ENCODE measurements at regions of chr16 and their contacts with region 1.

Region 1: DNA sequence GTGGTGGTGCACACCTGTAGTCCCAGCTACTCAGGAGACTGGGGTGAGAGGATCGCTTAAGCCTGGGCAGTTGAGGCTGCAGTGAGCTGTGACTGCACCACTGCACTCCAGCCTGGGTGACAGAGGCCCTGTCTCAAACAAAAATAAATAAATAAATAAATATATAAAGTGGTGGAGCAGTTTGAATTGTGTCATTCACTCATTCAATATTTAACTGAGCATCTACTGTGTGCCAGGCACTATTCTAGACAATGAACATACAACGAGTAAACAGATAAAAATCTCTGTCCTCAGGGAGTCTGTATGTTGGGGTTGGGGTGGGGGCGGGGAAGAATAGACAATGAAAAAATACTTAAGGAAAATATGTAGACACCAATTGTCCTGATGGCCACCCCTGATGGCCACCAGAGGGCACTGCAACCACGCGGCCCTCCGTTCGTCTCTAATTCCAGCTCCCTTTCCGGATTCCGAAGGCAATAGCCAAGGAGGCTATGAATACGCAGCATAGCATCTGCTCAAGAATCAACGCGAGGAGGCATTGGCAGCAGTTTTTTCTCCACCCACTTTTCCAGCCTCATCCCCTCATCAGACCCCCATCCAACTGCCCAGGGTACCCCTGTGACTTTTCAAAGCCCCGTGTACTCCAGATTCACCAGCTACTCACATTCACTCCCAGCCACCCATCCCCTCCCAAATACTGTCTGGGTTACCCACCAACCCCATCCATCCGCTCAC is 21.4 kb downstream of the QPRT start:
- DNase-seq: peak; percentile 55 to 89 (median 75)
- ATAC-seq: no peak
- H3K4me3 ChIP-seq: no peak overlapping the region
- H3K4me3 Mint-ChIP-seq: peak overlapping the region; percentile 52
- H3K27ac ChIP-seq: peak overlapping the region in 1 of 2 experiments; percentile 86
- H3K27ac Mint-ChIP-seq: peak overlapping the region; percentile 92
- H3K4me1 ChIP-seq: peaks cover 32% of the 10 kb centered on the region
- H3K4me1 Mint-ChIP-seq: peaks cover 37% of the 10 kb centered on the region
- H3K27me3 ChIP-seq: no peaks in the 10 kb centered on the region
- H3K27me3 Mint-ChIP-seq: no peaks in the 10 kb centered on the region
- CTCF ChIP-seq: peak; percentile 90

Region 2: GRCh38 chr16:29720699-29721098 is 20.3 kb after region 1 on chr16:
- CTCF ChIA-PET with region 1: interaction called, 89 read pairs
- POLR2A ChIA-PET with region 1: interaction called, 4 read pairs
- intact Hi-C with region 1: loop called (anchors 1 to 2 kb)
- DNase-seq: no peak
- ATAC-seq: no peak
- H3K4me3 ChIP-seq: no peak overlapping the region
- H3K4me3 Mint-ChIP-seq: no peak overlapping the region
- H3K27ac ChIP-seq: no peak overlapping the region
- H3K27ac Mint-ChIP-seq: no peak overlapping the region
- H3K4me1 ChIP-seq: peaks cover 3% of the 10 kb centered on the region
- H3K4me1 Mint-ChIP-seq: peaks cover 17% of the 10 kb centered on the region
- H3K27me3 ChIP-seq: no peaks in the 10 kb centered on the region
- H3K27me3 Mint-ChIP-seq: no peaks in the 10 kb centered on the region
- CTCF ChIP-seq: no peak

Region 3: GRCh38 chr16:29745853-29746345 is 45.5 kb after region 1 on chr16 and contains the start of gene C16orf54:
- CTCF ChIA-PET with region 1: interaction called, 8 read pairs
- POLR2A ChIA-PET with region 1: interaction called, 9 read pairs
- intact Hi-C with region 1: loop called (anchors 1 kb)
- DNase-seq: peak; percentile 88 to 98 (median 95)
- ATAC-seq: peak; percentile 81
- H3K4me3 ChIP-seq: peak within 1 kb of the TSS; percentile 90 to 93
- H3K4me3 Mint-ChIP-seq: peak within 1 kb of the TSS; percentile 94
- H3K27ac ChIP-seq: peak within 1 kb of the TSS; percentile 96 to 98
- H3K27ac Mint-ChIP-seq: peak within 1 kb of the TSS; percentile 96
- H3K4me1 ChIP-seq: peaks cover 62% of the 10 kb centered on the region
- H3K4me1 Mint-ChIP-seq: peaks cover 69% of the 10 kb centered on the region
- H3K27me3 ChIP-seq: no peaks in the 10 kb centered on the region
- H3K27me3 Mint-ChIP-seq: no peaks in the 10 kb centered on the region
- CTCF ChIP-seq: no peak
- total RNA-seq, gene C16orf54: 129 to 132 TPM

Region 4: GRCh38 chr16:29815793-29816693 is 115.6 kb after region 1 on chr16 and contains the start of gene PAGR1:
- CTCF ChIA-PET with region 1: interaction called, 24 read pairs
- POLR2A ChIA-PET with region 1: interaction called, 48 read pairs
- intact Hi-C with region 1: loop called (anchors 1 kb)
- DNase-seq: peak; percentile 97 to 100 (median 98)
- ATAC-seq: peak; percentile 77
- H3K4me3 ChIP-seq: peak within 1 kb of the TSS; percentile 74 to 90
- H3K4me3 Mint-ChIP-seq: peak within 1 kb of the TSS; percentile 98
- H3K27ac ChIP-seq: peak within 1 kb of the TSS; percentile 80 to 86
- H3K27ac Mint-ChIP-seq: peak within 1 kb of the TSS; percentile 98
- H3K4me1 ChIP-seq: peaks cover 59% of the 10 kb centered on the region
- H3K4me1 Mint-ChIP-seq: peaks cover 62% of the 10 kb centered on the region
- H3K27me3 ChIP-seq: no peaks in the 10 kb centered on the region
- H3K27me3 Mint-ChIP-seq: no peaks in the 10 kb centered on the region
- CTCF ChIP-seq: peak; percentile 92
- total RNA-seq, gene PAGR1: 13.8 to 16.8 TPM

Region 5: GRCh38 chr16:29995911-29996772 is 295.7 kb after region 1 on chr16 and contains the start of gene INO80E:
- CTCF ChIA-PET with region 1: no interaction called
- POLR2A ChIA-PET with region 1: interaction called, 4 read pairs
- intact Hi-C with region 1: loop called in 1 of 2 experiments (anchors 1 kb)
- DNase-seq: peak; percentile 98 to 100 (median 99)
- ATAC-seq: peak; percentile 96
- H3K4me3 ChIP-seq: peak within 1 kb of the TSS; percentile 93 to 100
- H3K4me3 Mint-ChIP-seq: peak within 1 kb of the TSS; percentile 94
- H3K27ac ChIP-seq: peak within 1 kb of the TSS; percentile 99
- H3K27ac Mint-ChIP-seq: peak within 1 kb of the TSS; percentile 97
- H3K4me1 ChIP-seq: peaks cover 14% of the 10 kb centered on the region
- H3K4me1 Mint-ChIP-seq: peaks cover 39% of the 10 kb centered on the region
- H3K27me3 ChIP-seq: no peaks in the 10 kb centered on the region
- H3K27me3 Mint-ChIP-seq: no peaks in the 10 kb centered on the region
- CTCF ChIP-seq: no peak
- total RNA-seq, gene INO80E: 49.8 to 59.4 TPM